B cell (primary cell): ENCODE measurements at regions of chr19 and their contacts with region 1.

Region 1: GRCh38 chr19:13104360-13104847 is 1.7 kb upstream of the LYL1 start:
- DNase-seq: peak; percentile 98
- ATAC-seq: peak; percentile 60
- H3K4me3 ChIP-seq: peak overlapping the region; percentile 53 to 98 (median 96)
- H3K4me3 Mint-ChIP-seq: peak overlapping the region; percentile 97
- H3K27ac ChIP-seq: peak overlapping the region; percentile 83 to 100
- H3K27ac Mint-ChIP-seq: peak overlapping the region; percentile 100
- H3K4me1 ChIP-seq: peaks cover 39 to 69% of the 10 kb centered on the region in 2 donors
- H3K4me1 Mint-ChIP-seq: peaks cover 62% of the 10 kb centered on the region
- H3K27me3 ChIP-seq: no peaks in the 10 kb centered on the region
- H3K27me3 Mint-ChIP-seq: no peaks in the 10 kb centered on the region
- CTCF ChIP-seq: peak; percentile 97

Region 2: GRCh38 chr19:12965017-12965811 is 139.2 kb before region 1 on chr19:
- CTCF ChIA-PET with region 1: interaction called, 12 read pairs
- POLR2A ChIA-PET with region 1: interaction called, 9 read pairs
- intact Hi-C with region 1: no loop called
- DNase-seq: peak; percentile 89
- ATAC-seq: peak; percentile 96
- H3K4me3 ChIP-seq: peak overlapping the region in 4 of 5 experiments; percentile 30 to 65 (median 58)
- H3K4me3 Mint-ChIP-seq: peak overlapping the region; percentile 98
- H3K27ac ChIP-seq: no peak overlapping the region
- H3K27ac Mint-ChIP-seq: peak overlapping the region; percentile 89
- H3K4me1 ChIP-seq: peaks cover 4 to 10% of the 10 kb centered on the region in 2 donors
- H3K4me1 Mint-ChIP-seq: peaks cover 6% of the 10 kb centered on the region
- H3K27me3 ChIP-seq: no peaks in the 10 kb centered on the region
- H3K27me3 Mint-ChIP-seq: peaks cover under 1% of the 10 kb centered on the region
- CTCF ChIP-seq: peak; percentile 92

Region 3: GRCh38 chr19:13093407-13094105 is 10.8 kb before region 1 on chr19:
- CTCF ChIA-PET with region 1: interaction called, 108 read pairs
- POLR2A ChIA-PET with region 1: interaction called, 107 read pairs
- intact Hi-C with region 1: loop called (anchors 1 kb)
- DNase-seq: peak; percentile 91
- ATAC-seq: peak; percentile 40
- H3K4me3 ChIP-seq: no peak overlapping the region
- H3K4me3 Mint-ChIP-seq: peak overlapping the region; percentile 93
- H3K27ac ChIP-seq: peak overlapping the region in 1 of 2 donors; percentile 87
- H3K27ac Mint-ChIP-seq: peak overlapping the region; percentile 93
- H3K4me1 ChIP-seq: peaks cover 12 to 33% of the 10 kb centered on the region in 2 donors
- H3K4me1 Mint-ChIP-seq: peaks cover 28% of the 10 kb centered on the region
- H3K27me3 ChIP-seq: no peaks in the 10 kb centered on the region
- H3K27me3 Mint-ChIP-seq: no peaks in the 10 kb centered on the region
- CTCF ChIP-seq: peak; percentile 91

Region 4: GRCh38 chr19:13155472-13156359 is 51.3 kb after region 1 on chr19:
- CTCF ChIA-PET with region 1: interaction called, 28 read pairs
- POLR2A ChIA-PET with region 1: interaction called, 45 read pairs
- intact Hi-C with region 1: loop called (anchors 1 kb)
- DNase-seq: peak; percentile 98
- ATAC-seq: peak; percentile 53
- H3K4me3 ChIP-seq: peak overlapping the region; percentile 82 to 100 (median 98)
- H3K4me3 Mint-ChIP-seq: peak overlapping the region; percentile 92
- H3K27ac ChIP-seq: peak overlapping the region; percentile 94 to 96
- H3K27ac Mint-ChIP-seq: peak overlapping the region; percentile 100
- H3K4me1 ChIP-seq: peaks cover 44 to 62% of the 10 kb centered on the region in 2 donors
- H3K4me1 Mint-ChIP-seq: peaks cover 42% of the 10 kb centered on the region
- H3K27me3 ChIP-seq: no peaks in the 10 kb centered on the region
- H3K27me3 Mint-ChIP-seq: no peaks in the 10 kb centered on the region
- CTCF ChIP-seq: no peak

Region 5: DNA sequence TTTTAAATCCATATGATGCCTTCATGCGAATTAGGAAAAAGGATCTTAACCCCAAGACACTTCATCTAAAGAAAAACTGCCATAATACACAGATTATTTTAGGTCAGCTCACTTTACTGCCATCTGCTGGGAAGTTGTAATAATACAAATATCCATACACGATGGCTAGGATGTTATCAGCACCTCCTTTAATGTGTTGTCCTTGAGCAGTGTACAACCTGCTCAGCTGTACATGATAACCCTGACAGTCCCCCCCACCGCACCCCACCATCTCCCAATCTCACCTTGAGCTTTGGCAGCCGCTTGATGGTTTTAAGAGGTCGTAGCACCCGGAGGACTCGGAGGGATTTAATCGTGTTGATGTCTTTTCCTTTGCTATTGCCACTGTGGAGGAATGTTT is 158.0 kb after region 1 on chr19:
- CTCF ChIA-PET with region 1: interaction called, 13 read pairs
- POLR2A ChIA-PET with region 1: interaction called, 4 read pairs
- intact Hi-C with region 1: loop called (anchors 5 kb)
- DNase-seq: peak; percentile 76
- ATAC-seq: peak; percentile 22
- H3K4me3 ChIP-seq: no peak overlapping the region
- H3K4me3 Mint-ChIP-seq: no peak overlapping the region
- H3K27ac ChIP-seq: no peak overlapping the region
- H3K27ac Mint-ChIP-seq: peak overlapping the region; percentile 67
- H3K4me1 ChIP-seq: peaks cover 16 to 20% of the 10 kb centered on the region in 2 donors
- H3K4me1 Mint-ChIP-seq: peaks cover 19% of the 10 kb centered on the region
- H3K27me3 ChIP-seq: peaks cover 0 to 7% (median 1%) of the 10 kb centered on the region in 4 experiments
- H3K27me3 Mint-ChIP-seq: peaks cover 15% of the 10 kb centered on the region
- CTCF ChIP-seq: peak; percentile 71

Region 6: GRCh38 chr19:14006243-14006765 is 901.9 kb after region 1 on chr19 and contains the start of gene RFX1:
- CTCF ChIA-PET with region 1: no interaction called
- POLR2A ChIA-PET with region 1: no interaction called
- intact Hi-C with region 1: loop called (anchors 5 kb)
- DNase-seq: peak; percentile 99
- ATAC-seq: peak; percentile 70
- H3K4me3 ChIP-seq: peak within 1 kb of the TSS; percentile 74 to 96 (median 82)
- H3K4me3 Mint-ChIP-seq: peak within 1 kb of the TSS; percentile 90
- H3K27ac ChIP-seq: peak within 1 kb of the TSS; percentile 99 to 100
- H3K27ac Mint-ChIP-seq: peak within 1 kb of the TSS; percentile 97
- H3K4me1 ChIP-seq: peaks cover 42 to 48% of the 10 kb centered on the region in 2 donors
- H3K4me1 Mint-ChIP-seq: peaks cover 46% of the 10 kb centered on the region
- H3K27me3 ChIP-seq: no peaks in the 10 kb centered on the region
- H3K27me3 Mint-ChIP-seq: no peaks in the 10 kb centered on the region
- CTCF ChIP-seq: no peak
- total RNA-seq, gene RFX1: 33.3 and 33.9 TPM in 2 replicates